HepG2 (cell line): ENCODE measurements at regions of chr6 and their contacts with region 1.

Region 1: DNA sequence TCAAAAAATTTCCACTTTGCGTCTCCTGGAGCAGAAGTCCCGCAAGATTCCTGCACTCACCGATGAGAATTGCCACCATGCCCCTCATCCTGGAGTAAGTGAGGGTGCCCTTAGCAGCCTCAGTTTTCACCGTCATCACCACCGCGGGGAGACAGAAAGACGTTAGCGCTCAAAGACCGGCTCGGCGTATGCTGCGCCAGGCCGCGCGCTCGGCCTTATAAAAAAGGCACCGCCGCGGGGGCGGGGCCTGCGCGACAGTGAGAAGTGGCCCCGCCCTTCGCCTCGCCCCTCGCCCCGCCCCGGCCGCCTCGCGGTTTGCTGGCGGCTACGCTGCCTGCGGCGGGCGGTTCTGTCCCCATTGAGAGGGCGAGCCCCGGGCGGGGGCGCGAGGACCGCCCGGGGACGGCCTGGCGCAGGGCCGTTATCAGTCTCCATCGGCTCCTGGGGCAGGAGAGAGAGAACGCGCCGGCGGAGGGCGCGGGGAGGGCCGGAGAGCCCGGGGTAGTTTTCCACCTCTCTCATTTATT is 122.3 kb upstream of the SLC2A12 start:
- DNase-seq: peak; percentile 87
- ATAC-seq: peak; percentile 93
- H3K4me3 ChIP-seq: peak overlapping the region; percentile 77 to 82 (median 78)
- H3K27ac ChIP-seq: peak overlapping the region; percentile 86
- H3K4me1 ChIP-seq: peaks cover 69% of the 10 kb centered on the region
- H3K27me3 ChIP-seq: no peaks in the 10 kb centered on the region; a peak in 1 of 5 replicates
- CTCF ChIP-seq: peak; percentile 48; the same call in 1 of the 2 replicates
- EP300 ChIP-seq: no peak; a peak in 1 of 4 replicates
- POLR2A ChIP-seq: peak; percentile 99
- RAD21 ChIP-seq: peak; percentile 76

Region 2: DNA sequence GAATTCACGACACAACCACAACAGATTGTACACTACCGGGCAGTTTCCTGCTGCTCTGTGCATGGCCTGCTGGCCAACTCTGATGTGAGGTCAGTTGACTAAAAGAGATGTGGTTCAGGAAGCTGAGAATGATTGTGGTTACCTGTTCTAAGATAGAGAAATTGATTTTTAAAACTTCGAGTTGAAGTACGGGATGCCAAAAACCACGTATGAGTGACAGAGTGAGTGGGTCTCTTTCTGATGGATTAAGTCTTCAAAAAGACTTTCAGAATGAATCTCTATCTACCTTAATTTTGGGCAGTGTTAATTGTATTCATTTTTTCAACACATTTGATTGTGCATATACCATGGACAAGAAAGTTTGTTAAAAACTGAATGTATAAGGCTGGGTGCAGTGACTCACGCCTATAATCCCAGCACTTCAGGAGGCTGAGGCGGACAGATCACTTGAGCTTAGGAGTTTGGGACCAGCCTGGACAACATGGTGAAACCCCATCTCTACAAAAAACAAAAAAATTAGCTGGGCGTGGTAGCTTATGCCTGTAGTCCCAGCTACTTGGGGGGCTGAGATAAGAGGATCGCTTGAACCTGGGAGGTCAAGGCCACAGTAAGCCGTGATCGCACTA is 21.9 kb after region 1 on chr6:
- CTCF ChIA-PET with region 1: interaction called, 3 read pairs
- POLR2A ChIA-PET with region 1: interaction called, 15 read pairs
- in situ Hi-C with region 1: no loop called
- intact Hi-C with region 1: loop called (anchors 1 kb)
- DNase-seq: no peak
- ATAC-seq: no peak
- H3K4me3 ChIP-seq: no peak overlapping the region
- H3K27ac ChIP-seq: peak overlapping the region; percentile 83
- H3K4me1 ChIP-seq: peaks cover 94% of the 10 kb centered on the region
- H3K27me3 ChIP-seq: no peaks in the 10 kb centered on the region
- CTCF ChIP-seq: no peak
- EP300 ChIP-seq: no peak
- POLR2A ChIP-seq: no peak
- RAD21 ChIP-seq: no peak

Region 3: GRCh38 chr6:134322216-134322615 is 147.5 kb after region 1 on chr6:
- CTCF ChIA-PET with region 1: no interaction called
- POLR2A ChIA-PET with region 1: no interaction called
- in situ Hi-C with region 1: no loop called
- intact Hi-C with region 1: loop called (anchors 10 kb)
- DNase-seq: no peak
- ATAC-seq: no peak
- H3K4me3 ChIP-seq: no peak overlapping the region
- H3K27ac ChIP-seq: no peak overlapping the region
- H3K4me1 ChIP-seq: no peaks in the 10 kb centered on the region
- H3K27me3 ChIP-seq: peaks cover 0 to 16% of the 10 kb centered on the region in 2 experiments; a peak in 2 of 5 replicates
- CTCF ChIP-seq: no peak
- EP300 ChIP-seq: no peak
- POLR2A ChIP-seq: no peak
- RAD21 ChIP-seq: no peak

Region 4: DNA sequence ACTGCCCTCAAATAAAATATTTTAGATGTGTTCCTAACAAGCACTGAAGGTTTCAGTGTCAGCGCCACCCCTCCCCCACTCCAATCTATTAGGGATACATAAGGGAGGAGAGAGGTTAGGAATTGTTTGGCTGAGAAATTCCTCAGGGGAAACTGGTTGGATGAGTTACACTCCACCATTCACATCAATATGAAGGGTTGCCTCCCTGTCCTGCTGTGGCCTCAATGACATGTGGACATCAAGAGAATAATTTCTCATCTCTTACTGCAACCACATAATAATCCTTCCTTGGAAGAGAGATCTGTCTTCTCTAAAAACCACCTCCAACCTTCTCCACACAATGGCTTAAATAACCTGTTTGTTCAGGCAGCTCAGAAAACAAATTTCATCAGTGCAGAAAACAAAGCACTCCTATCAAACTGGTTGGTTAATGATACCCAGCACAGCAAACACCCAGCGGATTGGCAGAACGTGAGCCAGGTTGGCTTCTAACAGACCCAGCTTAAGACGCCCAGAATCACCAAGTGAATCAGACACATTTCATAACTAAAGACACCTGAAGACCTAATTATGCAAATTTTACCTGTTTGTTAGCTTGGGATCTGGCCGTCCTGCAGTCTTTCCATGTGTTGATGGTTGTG is 279.3 kb after region 1 on chr6:
- CTCF ChIA-PET with region 1: interaction called, 11 read pairs
- POLR2A ChIA-PET with region 1: no interaction called
- in situ Hi-C with region 1: loop called (anchors 25 kb)
- intact Hi-C with region 1: loop called (anchors 1 kb)
- DNase-seq: no peak
- ATAC-seq: no peak
- H3K4me3 ChIP-seq: no peak overlapping the region
- H3K27ac ChIP-seq: no peak overlapping the region
- H3K4me1 ChIP-seq: no peaks in the 10 kb centered on the region
- H3K27me3 ChIP-seq: no peaks in the 10 kb centered on the region; a peak in 1 of 5 replicates
- CTCF ChIP-seq: no peak
- EP300 ChIP-seq: no peak
- POLR2A ChIP-seq: no peak
- RAD21 ChIP-seq: no peak

Region 5: GRCh38 chr6:134640975-134641429 is 466.3 kb after region 1 on chr6:
- CTCF ChIA-PET with region 1: interaction called, 78 read pairs
- POLR2A ChIA-PET with region 1: interaction called, 18 read pairs
- in situ Hi-C with region 1: loop called (anchors 5 kb)
- intact Hi-C with region 1: loop called (anchors 1 kb)
- DNase-seq: peak; percentile 79
- ATAC-seq: peak; percentile 96
- H3K4me3 ChIP-seq: no peak overlapping the region
- H3K27ac ChIP-seq: no peak overlapping the region
- H3K4me1 ChIP-seq: 0 out of 2 replicates have a peak, but pooled peaks cover 4% of the 10 kb centered on the region
- H3K27me3 ChIP-seq: no peaks in the 10 kb centered on the region; a peak in 1 of 5 replicates
- CTCF ChIP-seq: peak; percentile 94
- EP300 ChIP-seq: no peak
- POLR2A ChIP-seq: no peak
- RAD21 ChIP-seq: peak; percentile 85; the same call in 1 of the 2 replicates

Region 6: DNA sequence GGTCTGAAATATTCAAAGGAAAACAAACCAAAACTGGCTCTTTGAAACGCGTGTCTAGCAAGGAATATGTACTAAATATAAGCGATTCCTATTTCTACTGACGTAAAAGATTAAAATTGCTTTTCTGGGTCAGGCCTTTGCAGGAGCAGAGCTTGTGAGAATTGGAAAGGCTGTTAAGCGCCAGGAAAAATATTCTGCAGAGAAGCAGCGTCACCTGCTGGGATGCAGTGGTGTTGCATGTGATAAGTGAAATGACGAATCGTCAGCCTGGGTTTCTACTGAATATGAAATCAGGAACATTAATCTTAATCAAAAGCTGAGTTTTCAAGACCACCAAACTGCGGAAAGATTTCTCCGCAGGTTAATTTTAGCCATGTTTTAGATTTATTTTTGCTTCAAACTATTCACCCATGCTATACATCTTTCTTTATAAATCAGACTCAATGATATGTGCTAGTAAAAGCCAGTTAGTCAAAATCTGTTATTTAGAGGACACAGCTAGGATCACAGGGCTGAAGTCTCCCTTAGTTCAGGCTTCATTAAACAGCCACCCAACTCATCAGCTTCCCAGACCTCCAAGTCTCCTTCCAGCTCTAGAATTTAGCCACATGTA is 707.8 kb after region 1 on chr6:
- CTCF ChIA-PET with region 1: no interaction called
- POLR2A ChIA-PET with region 1: no interaction called
- in situ Hi-C with region 1: no loop called
- intact Hi-C with region 1: loop called (anchors 5 kb)
- DNase-seq: peak; percentile 43
- ATAC-seq: peak; percentile 79
- H3K4me3 ChIP-seq: no peak overlapping the region
- H3K27ac ChIP-seq: no peak overlapping the region
- H3K4me1 ChIP-seq: no peaks in the 10 kb centered on the region
- H3K27me3 ChIP-seq: no peaks in the 10 kb centered on the region
- CTCF ChIP-seq: peak; percentile 87
- EP300 ChIP-seq: no peak
- POLR2A ChIP-seq: no peak
- RAD21 ChIP-seq: peak; percentile 85